Activated CD4-positive, alpha-beta T cell treated with anti-CD3 and anti-CD28 coated beads for 36 hours (primary cell): ENCODE measurements at regions of chr20 and their contacts with region 1.

Region 1: GRCh38 chr20:1437235-1437904 is 29.3 kb downstream of the NSFL1C start:
- DNase-seq: peak; percentile 89
- ATAC-seq: peak; percentile 56
- H3K4me3 Mint-ChIP-seq: no peak overlapping the region
- H3K27ac Mint-ChIP-seq: no peak overlapping the region
- H3K4me1 Mint-ChIP-seq: peaks cover 27% of the 10 kb centered on the region
- H3K27me3 Mint-ChIP-seq: no peaks in the 10 kb centered on the region

Region 2: DNA sequence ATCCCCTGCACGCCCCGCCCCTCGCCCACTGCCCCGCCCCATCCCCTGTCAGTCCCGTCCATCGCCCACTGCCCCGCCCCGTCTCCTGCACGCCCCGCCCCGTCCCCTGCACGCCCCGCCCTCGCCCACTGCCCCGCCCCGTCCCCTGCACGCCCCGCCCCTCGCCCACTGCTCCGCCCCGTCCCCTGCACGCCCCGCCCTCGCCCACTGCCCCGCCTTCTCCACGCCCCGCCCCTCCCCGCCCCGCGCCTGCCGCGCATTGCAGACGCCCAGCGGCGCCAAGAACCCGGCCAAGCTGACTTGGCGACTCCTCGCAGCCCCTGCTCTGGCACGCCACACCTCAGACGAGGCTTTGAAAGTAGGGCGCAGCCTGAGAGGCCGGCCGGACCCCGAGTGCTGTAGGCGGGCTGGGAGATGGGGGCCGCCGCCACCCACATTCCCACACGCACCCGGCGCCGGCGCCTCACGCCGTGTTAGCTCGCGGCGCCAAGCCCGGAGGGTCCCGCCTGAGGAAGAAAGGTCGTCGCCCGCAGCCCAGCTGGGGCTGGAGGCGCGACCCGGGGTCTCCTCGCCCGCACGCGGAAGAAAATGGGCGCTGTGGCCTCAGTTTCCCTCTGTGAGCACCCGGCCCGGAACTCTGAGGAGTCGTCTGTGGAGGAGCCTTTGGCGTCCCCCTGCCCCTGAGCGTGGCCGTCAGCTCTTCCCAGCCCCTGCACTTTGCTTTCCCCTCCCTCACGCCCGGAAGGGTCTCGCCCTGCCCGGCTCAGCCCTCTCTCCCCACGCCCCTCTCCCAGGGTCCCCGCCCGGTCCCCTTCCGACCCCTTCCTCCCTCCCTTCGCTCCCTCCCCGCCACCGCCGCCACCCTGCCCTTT is 211.4 kb before region 1 on chr20 and contains the start of gene RAD21L1:
- CTCF ChIA-PET with region 1: interaction called, 5 read pairs
- POLR2A ChIA-PET with region 1: no interaction called
- intact Hi-C with region 1: loop called (anchors 2 to 5 kb)
- DNase-seq: peak; percentile 94
- ATAC-seq: peak; percentile 85
- H3K4me3 Mint-ChIP-seq: peak within 1 kb of the TSS; percentile 75
- H3K27ac Mint-ChIP-seq: peak within 1 kb of the TSS; percentile 79
- H3K4me1 Mint-ChIP-seq: peaks cover 11% of the 10 kb centered on the region
- H3K27me3 Mint-ChIP-seq: peaks cover 9% of the 10 kb centered on the region
- total RNA-seq, gene RAD21L1: 0.32 TPM in 1 of 2 experiments, not detected in the other

Region 3: DNA sequence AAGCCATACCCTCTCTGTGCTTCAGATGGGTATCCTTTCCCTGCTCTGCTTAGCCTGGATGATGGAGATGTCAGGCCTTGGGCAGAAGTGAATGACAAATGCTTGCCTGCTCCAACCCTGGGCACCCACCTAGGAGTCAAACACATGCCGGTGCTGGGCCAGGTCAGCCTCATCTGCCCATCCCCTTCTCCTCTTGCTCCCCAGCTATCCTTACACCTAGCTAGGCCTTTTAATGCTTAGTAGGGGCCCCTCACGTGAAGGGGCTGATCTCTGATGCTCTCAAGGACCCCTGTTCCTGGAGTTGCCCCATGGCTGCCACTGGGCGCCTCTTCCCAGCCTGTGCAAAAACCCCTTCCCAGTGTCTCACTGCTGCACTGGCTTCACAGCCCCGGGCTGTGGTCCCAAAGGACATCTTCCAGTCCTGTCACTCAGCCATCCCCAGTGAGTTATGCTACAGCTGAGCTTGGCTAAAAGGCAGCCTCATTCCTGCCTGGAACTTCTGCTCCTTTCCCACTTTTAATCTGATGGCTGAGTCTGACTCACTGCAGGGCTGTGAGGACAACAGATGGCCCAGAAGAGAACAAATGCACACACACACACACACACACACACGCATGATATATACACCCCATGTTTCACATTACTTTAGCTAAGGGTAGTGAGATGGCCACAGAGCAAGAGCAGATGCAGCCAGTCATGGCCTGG is 95.7 kb before region 1 on chr20:
- CTCF ChIA-PET with region 1: interaction called, 10 read pairs
- POLR2A ChIA-PET with region 1: no interaction called
- intact Hi-C with region 1: no loop called
- DNase-seq: no peak
- ATAC-seq: no peak
- H3K4me3 Mint-ChIP-seq: no peak overlapping the region
- H3K27ac Mint-ChIP-seq: no peak overlapping the region
- H3K4me1 Mint-ChIP-seq: peaks cover 25% of the 10 kb centered on the region
- H3K27me3 Mint-ChIP-seq: no peaks in the 10 kb centered on the region

Region 4: GRCh38 chr20:1423625-1424106 is 13.7 kb before region 1 on chr20:
- CTCF ChIA-PET with region 1: interaction called, 13 read pairs
- POLR2A ChIA-PET with region 1: no interaction called
- intact Hi-C with region 1: no loop called
- DNase-seq: peak; percentile 46
- ATAC-seq: peak; percentile 58
- H3K4me3 Mint-ChIP-seq: no peak overlapping the region
- H3K27ac Mint-ChIP-seq: no peak overlapping the region
- H3K4me1 Mint-ChIP-seq: peaks cover 7% of the 10 kb centered on the region
- H3K27me3 Mint-ChIP-seq: no peaks in the 10 kb centered on the region

Region 5: DNA sequence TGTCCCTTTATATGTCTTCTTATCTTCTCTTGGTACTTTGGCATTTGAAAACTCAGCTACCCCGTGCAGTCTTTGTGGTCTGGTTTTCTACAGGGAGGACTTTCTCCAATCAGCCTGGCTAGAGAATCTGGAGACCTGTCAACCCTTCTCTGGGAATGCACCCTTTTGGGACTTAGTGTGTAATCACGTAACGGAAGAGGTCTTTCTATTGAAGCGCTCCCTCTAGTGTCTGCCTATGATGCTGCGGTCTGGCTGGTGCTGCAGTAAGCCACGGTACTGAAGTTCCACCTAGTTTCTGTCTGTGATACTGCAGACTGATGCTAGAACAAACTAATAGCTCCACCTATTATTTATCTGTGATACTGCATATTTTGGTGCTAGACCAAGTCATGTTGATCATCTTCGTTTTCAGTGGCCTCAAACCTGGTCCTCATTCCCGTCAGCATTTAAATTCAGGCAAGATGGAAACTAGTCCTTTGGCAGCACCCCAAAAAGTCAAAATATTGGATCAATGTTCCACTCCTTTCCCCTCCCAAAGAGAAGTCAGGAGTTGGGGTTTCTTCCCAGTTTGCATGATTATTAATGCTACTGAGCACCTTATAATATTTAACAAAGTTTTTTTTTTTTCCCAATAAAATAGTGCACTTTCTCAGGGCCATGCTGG is 66.3 kb after region 1 on chr20:
- CTCF ChIA-PET with region 1: no interaction called
- POLR2A ChIA-PET with region 1: no interaction called
- intact Hi-C with region 1: loop called in 1 of 2 experiments (anchors 1 kb)
- DNase-seq: peak; percentile 88
- ATAC-seq: peak; percentile 100
- H3K4me3 Mint-ChIP-seq: no peak overlapping the region
- H3K27ac Mint-ChIP-seq: no peak overlapping the region
- H3K4me1 Mint-ChIP-seq: peaks cover 6% of the 10 kb centered on the region
- H3K27me3 Mint-ChIP-seq: peaks cover 19% of the 10 kb centered on the region

Region 6: GRCh38 chr20:2264118-2264517 is 826.7 kb after region 1 on chr20:
- CTCF ChIA-PET with region 1: no interaction called
- POLR2A ChIA-PET with region 1: no interaction called
- intact Hi-C with region 1: no loop called
- DNase-seq: no peak
- ATAC-seq: no peak
- H3K4me3 Mint-ChIP-seq: no peak overlapping the region
- H3K27ac Mint-ChIP-seq: no peak overlapping the region
- H3K4me1 Mint-ChIP-seq: no peaks in the 10 kb centered on the region
- H3K27me3 Mint-ChIP-seq: peaks cover 19% of the 10 kb centered on the region